ENCODE measurements at regions of chr1 and their contacts with region 1.

Region 1: GRCh38 chr1:71049951-71050598 is 2.5 kb upstream of the PTGER3 start:
- DNase-seq: peak; percentile 46
- H3K4me3 Mint-ChIP-seq: no peak overlapping the region
- H3K27ac Mint-ChIP-seq: no peak overlapping the region
- H3K4me1 Mint-ChIP-seq: no peaks in the 10 kb centered on the region
- H3K27me3 Mint-ChIP-seq: peaks cover 48% of the 10 kb centered on the region
- CTCF ChIP-seq: peak; percentile 39

Region 2: GRCh38 chr1:70134148-70134547 is 915.9 kb before region 1 on chr1:
- CTCF ChIA-PET with region 1: no interaction called
- intact Hi-C with region 1: loop called (anchors 10 kb)
- DNase-seq: no peak
- H3K4me3 Mint-ChIP-seq: no peak overlapping the region
- H3K27ac Mint-ChIP-seq: no peak overlapping the region
- H3K4me1 Mint-ChIP-seq: no peaks in the 10 kb centered on the region
- H3K27me3 Mint-ChIP-seq: no peaks in the 10 kb centered on the region
- CTCF ChIP-seq: no peak

Region 3: GRCh38 chr1:70436622-70437251 is 613.3 kb before region 1 on chr1:
- CTCF ChIA-PET with region 1: no interaction called
- intact Hi-C with region 1: loop called (anchors 10 kb)
- DNase-seq: no peak
- H3K4me3 Mint-ChIP-seq: no peak overlapping the region
- H3K27ac Mint-ChIP-seq: no peak overlapping the region
- H3K4me1 Mint-ChIP-seq: peaks cover 8% of the 10 kb centered on the region
- H3K27me3 Mint-ChIP-seq: no peaks in the 10 kb centered on the region
- CTCF ChIP-seq: no peak

Region 4: GRCh38 chr1:70528590-70529333 is 521.3 kb before region 1 on chr1:
- CTCF ChIA-PET with region 1: no interaction called
- intact Hi-C with region 1: loop called (anchors 1 kb)
- DNase-seq: peak; percentile 30
- H3K4me3 Mint-ChIP-seq: no peak overlapping the region
- H3K27ac Mint-ChIP-seq: no peak overlapping the region
- H3K4me1 Mint-ChIP-seq: peaks cover 8% of the 10 kb centered on the region
- H3K27me3 Mint-ChIP-seq: peaks cover 14% of the 10 kb centered on the region
- CTCF ChIP-seq: peak; percentile 54

Region 5: DNA sequence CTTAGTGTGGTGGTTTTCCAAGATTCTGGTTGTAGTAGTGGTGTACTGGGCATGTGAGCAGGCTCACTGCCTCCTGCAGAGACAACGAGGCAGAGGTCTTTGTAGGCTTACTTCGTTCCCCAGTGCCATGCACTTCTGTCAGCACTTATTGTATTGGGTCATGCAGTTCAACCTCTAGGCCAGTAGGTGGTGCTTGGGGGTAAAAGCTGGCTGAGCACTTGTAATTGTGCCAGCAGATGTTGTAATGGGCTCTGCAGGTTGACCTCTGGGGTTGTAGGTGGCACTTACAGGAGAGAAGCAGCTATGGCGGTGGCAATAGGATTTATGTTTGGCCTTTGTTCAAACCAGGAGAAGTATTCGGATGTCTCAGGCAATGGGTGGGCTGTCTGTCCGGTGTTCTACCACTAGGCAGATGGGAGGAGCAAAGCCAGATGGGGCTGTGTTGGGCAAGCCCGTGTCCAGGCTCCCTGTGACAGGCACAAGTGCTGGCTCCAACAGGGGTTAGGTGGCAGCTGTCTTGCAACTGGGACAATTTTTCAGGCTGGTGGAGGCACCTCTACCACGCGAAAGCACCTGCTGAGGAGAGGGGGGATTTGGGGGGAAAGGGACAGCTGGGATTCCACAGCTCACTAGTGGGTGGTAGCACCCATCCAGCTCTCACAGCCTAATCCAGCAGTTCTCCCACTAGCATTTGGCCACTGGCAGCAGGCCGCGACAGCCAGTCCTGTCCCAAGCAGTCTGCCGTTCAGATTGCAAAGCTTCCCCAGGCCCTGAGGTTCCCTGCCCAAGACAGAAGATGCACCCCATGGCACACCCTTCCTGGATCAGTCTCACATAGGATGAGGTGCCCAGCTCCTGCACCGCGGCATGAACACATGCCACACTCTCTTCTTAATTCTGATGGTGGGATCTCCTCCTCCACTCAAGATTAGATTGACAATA is 364.5 kb before region 1 on chr1:
- CTCF ChIA-PET with region 1: no interaction called
- intact Hi-C with region 1: loop called (anchors 1 kb)
- DNase-seq: peak; percentile 61
- H3K4me3 Mint-ChIP-seq: no peak overlapping the region
- H3K27ac Mint-ChIP-seq: no peak overlapping the region
- H3K4me1 Mint-ChIP-seq: no peaks in the 10 kb centered on the region
- H3K27me3 Mint-ChIP-seq: no peaks in the 10 kb centered on the region
- CTCF ChIP-seq: peak; percentile 74

Region 6: GRCh38 chr1:70745199-70745598 is 304.9 kb before region 1 on chr1:
- CTCF ChIA-PET with region 1: no interaction called
- intact Hi-C with region 1: loop called (anchors 2 kb)
- DNase-seq: no peak
- H3K4me3 Mint-ChIP-seq: no peak overlapping the region
- H3K27ac Mint-ChIP-seq: no peak overlapping the region
- H3K4me1 Mint-ChIP-seq: no peaks in the 10 kb centered on the region
- H3K27me3 Mint-ChIP-seq: no peaks in the 10 kb centered on the region
- CTCF ChIP-seq: peak; percentile 48

Region 7: DNA sequence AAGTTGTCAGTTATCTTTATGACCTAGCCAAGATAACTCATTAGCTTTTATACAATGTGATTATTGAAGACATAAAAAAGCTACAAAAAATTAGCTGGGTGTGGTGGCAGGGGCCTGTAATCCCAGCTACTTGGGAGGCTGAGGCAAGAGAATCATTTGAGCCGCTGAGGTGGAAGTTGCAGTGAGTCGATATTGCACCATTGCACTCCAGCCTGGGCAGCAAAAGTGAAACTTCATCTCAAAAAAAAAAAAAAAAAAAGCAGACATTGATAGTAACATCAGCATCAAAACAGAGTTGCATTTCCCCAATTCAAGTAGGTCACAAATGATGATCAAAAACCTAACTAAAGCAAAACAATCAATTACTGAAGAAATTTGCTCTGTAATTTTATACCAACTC is 193.9 kb before region 1 on chr1:
- CTCF ChIA-PET with region 1: no interaction called
- intact Hi-C with region 1: no loop called
- DNase-seq: no peak
- H3K4me3 Mint-ChIP-seq: no peak overlapping the region
- H3K27ac Mint-ChIP-seq: no peak overlapping the region
- H3K4me1 Mint-ChIP-seq: no peaks in the 10 kb centered on the region
- H3K27me3 Mint-ChIP-seq: no peaks in the 10 kb centered on the region
- CTCF ChIP-seq: no peak

Region 8: GRCh38 chr1:71031426-71031825 is 18.6 kb before region 1 on chr1:
- CTCF ChIA-PET with region 1: no interaction called
- intact Hi-C with region 1: no loop called
- DNase-seq: no peak
- H3K4me3 Mint-ChIP-seq: no peak overlapping the region
- H3K27ac Mint-ChIP-seq: no peak overlapping the region
- H3K4me1 Mint-ChIP-seq: no peaks in the 10 kb centered on the region
- H3K27me3 Mint-ChIP-seq: peaks cover 13% of the 10 kb centered on the region
- CTCF ChIP-seq: no peak

Region 9: GRCh38 chr1:71068325-71069240 is 18.5 kb after region 1 on chr1:
- CTCF ChIA-PET with region 1: no interaction called
- intact Hi-C with region 1: no loop called
- DNase-seq: no peak
- H3K4me3 Mint-ChIP-seq: no peak overlapping the region
- H3K27ac Mint-ChIP-seq: no peak overlapping the region
- H3K4me1 Mint-ChIP-seq: no peaks in the 10 kb centered on the region
- H3K27me3 Mint-ChIP-seq: no peaks in the 10 kb centered on the region
- CTCF ChIP-seq: no peak

Measured in Calu3 (cell line).